ENCODE measurements at regions of chr16 and their contacts with region 1.

Region 1: DNA sequence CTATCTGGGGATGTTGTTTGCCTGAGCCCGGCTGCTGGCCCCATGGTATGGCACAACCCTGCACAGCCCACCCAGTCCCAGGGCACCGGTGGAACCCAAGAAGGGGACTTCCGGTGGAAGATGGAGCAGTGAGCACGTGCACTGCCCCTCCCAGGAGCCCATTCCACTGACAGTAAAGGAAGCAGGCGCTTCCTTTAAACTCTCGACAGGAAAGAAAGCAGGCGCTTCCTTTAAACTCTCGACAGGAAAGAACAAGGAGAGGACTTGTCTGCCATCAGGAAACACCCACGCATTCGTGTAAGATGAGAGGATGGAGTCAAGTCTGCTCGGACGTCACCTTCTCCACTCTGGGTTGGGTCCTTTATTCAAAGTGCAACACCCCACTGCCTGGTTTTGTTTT is 53.7 kb downstream of the IL21R start:
- DNase-seq: peak; percentile 40
- H3K4me3 ChIP-seq: no peak overlapping the region
- H3K27ac ChIP-seq: no peak overlapping the region
- H3K4me1 ChIP-seq: peaks cover 17% of the 10 kb centered on the region
- H3K27me3 ChIP-seq: no peaks in the 10 kb centered on the region
- CTCF ChIP-seq: no peak

Region 2: DNA sequence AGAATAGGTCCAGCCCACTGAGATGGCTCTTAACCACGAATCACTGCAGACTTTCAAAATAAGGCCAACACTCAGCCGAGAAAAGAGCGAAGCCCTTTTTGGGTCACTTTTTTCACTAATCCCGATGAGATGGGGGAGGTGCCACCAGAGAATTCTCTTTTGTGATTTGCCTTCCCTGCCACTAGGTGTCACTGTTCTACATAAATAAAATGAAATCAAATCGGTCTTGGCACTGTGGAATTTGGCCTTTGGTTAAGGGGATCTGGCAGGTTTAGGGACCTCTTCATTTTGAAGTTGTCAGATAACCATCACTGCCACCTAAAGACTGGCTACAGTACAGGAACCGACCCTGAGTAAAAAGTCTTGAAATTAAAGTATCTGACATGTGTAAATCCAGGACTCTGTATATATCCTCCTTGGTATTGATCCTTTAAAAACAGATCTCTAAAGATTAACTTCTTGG is 1616.9 kb before region 1 on chr16:
- CTCF ChIA-PET with region 1: no interaction called
- dilution Hi-C with region 1: no loop called
- in situ Hi-C with region 1: no loop called
- intact Hi-C with region 1: loop called (anchors 2 kb)
- DNase-seq: peak; percentile 13
- H3K4me3 ChIP-seq: no peak overlapping the region
- H3K27ac ChIP-seq: no peak overlapping the region
- H3K4me1 ChIP-seq: no peaks in the 10 kb centered on the region
- H3K27me3 ChIP-seq: no peaks in the 10 kb centered on the region
- CTCF ChIP-seq: peak; percentile 67

Region 3: GRCh38 chr16:27401768-27402568 is 53.7 kb before region 1 on chr16 and contains the start of gene IL21R:
- CTCF ChIA-PET with region 1: no interaction called
- dilution Hi-C with region 1: loop called (anchors 5 kb)
- in situ Hi-C with region 1: no loop called
- intact Hi-C with region 1: no loop called
- DNase-seq: no peak
- H3K4me3 ChIP-seq: no peak within 1 kb of the TSS
- H3K27ac ChIP-seq: no peak within 1 kb of the TSS
- H3K4me1 ChIP-seq: no peaks in the 10 kb centered on the region
- H3K27me3 ChIP-seq: no peaks in the 10 kb centered on the region
- CTCF ChIP-seq: no peak
- total RNA-seq, gene IL21R: 0.17 to 0.64 TPM

Region 4: DNA sequence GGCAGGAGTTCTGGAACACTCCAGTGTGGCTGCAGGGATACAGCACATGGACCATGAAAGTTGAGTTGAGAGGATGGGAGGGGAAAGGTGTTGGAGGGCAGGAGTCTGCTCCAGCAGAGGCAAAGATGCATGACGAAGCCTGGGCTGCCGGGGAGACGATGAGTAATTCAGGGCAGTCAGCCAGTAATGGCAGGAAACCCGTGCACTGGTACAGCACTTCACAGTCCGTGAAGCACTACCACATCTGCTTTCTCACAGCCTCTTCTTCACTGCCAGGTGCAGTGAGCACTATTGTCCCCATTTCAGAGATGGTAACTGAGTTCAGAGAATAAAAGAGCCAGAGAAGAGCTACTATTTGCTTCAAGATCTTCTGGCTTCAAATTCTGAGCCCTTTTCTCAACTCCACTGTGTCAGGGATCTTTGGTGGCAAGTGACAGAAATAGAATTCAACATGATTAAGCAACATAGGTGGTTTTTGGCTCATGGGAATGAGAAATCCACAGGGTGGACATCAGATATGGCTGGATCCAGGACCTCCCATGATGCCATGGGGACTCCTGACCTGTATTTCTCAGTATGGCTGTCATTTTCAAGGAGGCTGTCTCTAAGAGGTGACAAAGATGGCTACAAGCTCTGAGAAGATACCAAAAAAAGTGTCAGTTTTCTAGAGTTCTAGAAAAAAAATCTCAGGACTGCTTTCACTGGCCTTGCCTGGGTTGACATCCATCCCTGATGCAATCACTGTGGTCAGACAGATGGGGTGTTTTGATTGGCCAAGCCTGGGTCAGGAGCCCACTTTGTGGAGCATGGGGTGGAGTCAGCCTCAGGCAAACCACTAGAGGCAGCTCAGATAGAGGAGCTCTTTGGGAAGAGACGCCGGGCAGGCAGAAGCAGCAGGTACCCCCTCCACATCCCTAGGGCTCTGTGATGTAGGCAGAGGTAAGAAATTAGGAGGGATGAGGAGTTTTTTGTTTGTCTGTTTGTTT is 29.0 kb before region 1 on chr16:
- CTCF ChIA-PET with region 1: no interaction called
- dilution Hi-C with region 1: no loop called
- in situ Hi-C with region 1: no loop called
- intact Hi-C with region 1: loop called (anchors 2 kb)
- DNase-seq: peak; percentile 92
- H3K4me3 ChIP-seq: peak overlapping the region in 1 of 3 experiments; percentile 21
- H3K27ac ChIP-seq: peak overlapping the region; percentile 13
- H3K4me1 ChIP-seq: peaks cover 12% of the 10 kb centered on the region
- H3K27me3 ChIP-seq: no peaks in the 10 kb centered on the region
- CTCF ChIP-seq: no peak